IMR-90 (cell line): ENCODE measurements at regions of chr11 and their contacts with region 1.

Region 1: DNA sequence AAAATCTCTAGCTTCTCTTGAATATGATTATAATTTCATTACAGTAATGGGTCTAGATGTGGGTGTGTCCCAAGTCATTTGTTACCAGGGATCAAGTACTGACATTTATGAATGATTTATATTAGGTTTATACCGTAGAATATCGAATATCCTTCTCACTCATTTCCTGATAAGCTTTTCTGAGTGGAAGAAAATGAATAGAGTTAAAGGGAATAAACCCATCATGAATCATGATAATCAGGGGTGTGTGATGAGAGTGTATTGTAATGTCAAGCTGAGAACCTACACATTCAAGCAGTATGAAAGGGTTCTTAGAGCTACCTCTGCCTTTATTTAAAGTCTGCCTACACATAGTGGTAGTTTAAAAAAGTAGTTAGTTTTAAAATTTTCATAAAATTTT is 17.3 kb downstream of the MED17 start:
- DNase-seq: no peak
- ATAC-seq: no peak
- H3K4me3 ChIP-seq: no peak overlapping the region
- H3K27ac ChIP-seq: no peak overlapping the region
- H3K4me1 ChIP-seq: no peaks in the 10 kb centered on the region
- H3K27me3 ChIP-seq: no peaks in the 10 kb centered on the region
- CTCF ChIP-seq: no peak
- POLR2A ChIP-seq: no peak
- RAD21 ChIP-seq: no peak

Region 2: DNA sequence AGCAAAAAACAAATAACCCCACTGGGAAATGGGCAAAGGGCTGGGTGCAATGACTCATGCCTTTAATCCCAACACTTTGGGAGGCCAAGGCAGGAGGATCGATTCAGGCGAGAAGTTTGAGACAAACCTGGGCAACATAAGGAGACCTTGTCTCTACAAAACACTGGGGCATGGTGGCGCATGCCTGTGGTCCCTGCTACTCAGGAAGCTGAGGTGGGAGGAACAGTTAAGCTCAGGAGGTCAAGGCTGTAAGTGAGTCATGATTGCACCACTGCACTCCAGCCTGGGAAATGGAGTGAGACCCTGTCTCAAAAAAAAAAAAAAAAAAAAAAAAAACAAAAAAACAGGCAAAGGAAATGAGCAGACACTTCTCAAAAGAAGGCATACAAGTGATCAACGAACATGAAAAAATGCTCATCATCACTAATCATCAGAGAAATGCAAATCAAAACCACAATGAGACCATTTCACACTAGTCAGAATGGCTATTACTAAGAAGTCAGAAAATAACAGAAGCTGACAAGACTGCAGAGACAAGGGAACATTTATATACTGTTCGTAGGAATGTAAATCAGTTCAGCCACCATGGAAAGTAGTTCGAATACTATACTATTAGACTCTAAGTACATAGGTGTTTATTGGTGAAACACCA is 210.0 kb before region 1 on chr11:
- CTCF ChIA-PET with region 1: no interaction called
- POLR2A ChIA-PET with region 1: no interaction called
- dilution Hi-C with region 1: no loop called
- in situ Hi-C with region 1: no loop called
- intact Hi-C with region 1: no loop called
- DNase-seq: peak; percentile 46
- ATAC-seq: no peak
- H3K4me3 ChIP-seq: no peak overlapping the region
- H3K27ac ChIP-seq: no peak overlapping the region
- H3K4me1 ChIP-seq: no peaks in the 10 kb centered on the region
- H3K27me3 ChIP-seq: peaks cover 10% of the 10 kb centered on the region
- CTCF ChIP-seq: no peak
- POLR2A ChIP-seq: no peak
- RAD21 ChIP-seq: no peak

Region 3: DNA sequence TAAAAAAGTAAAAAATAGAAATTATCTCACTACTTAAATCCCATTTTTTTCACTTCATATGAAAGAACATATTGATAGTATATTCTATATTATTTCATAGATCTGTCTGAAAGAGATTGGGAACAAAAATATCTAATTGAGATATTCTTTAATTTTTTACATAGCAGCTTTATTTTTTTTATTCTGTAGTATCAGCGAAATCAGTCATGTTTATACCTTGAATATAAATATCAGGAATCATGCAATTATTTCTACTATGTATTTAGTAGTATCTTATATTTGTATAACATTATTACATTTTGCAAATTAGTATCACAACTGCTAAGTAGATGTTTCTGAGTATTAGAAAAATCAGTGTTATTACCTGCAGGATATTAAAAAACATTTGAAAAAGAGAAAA is 39.5 kb before region 1 on chr11:
- CTCF ChIA-PET with region 1: no interaction called
- POLR2A ChIA-PET with region 1: no interaction called
- dilution Hi-C with region 1: no loop called
- in situ Hi-C with region 1: no loop called
- intact Hi-C with region 1: loop called (anchors 2 kb)
- DNase-seq: no peak
- ATAC-seq: no peak
- H3K4me3 ChIP-seq: no peak overlapping the region
- H3K27ac ChIP-seq: no peak overlapping the region
- H3K4me1 ChIP-seq: no peaks in the 10 kb centered on the region
- H3K27me3 ChIP-seq: no peaks in the 10 kb centered on the region
- CTCF ChIP-seq: no peak
- POLR2A ChIP-seq: no peak
- RAD21 ChIP-seq: no peak